ENCODE measurements at regions of chr2 and their contacts with region 1.

Region 1: GRCh38 chr2:73963385-73964120 is 21.2 kb upstream of the TET3 start:
- DNase-seq: peak; percentile 70
- H3K4me3 Mint-ChIP-seq: peak overlapping the region; percentile 44
- H3K27ac Mint-ChIP-seq: peak overlapping the region; percentile 86
- H3K4me1 Mint-ChIP-seq: peaks cover 32% of the 10 kb centered on the region
- H3K27me3 Mint-ChIP-seq: no peaks in the 10 kb centered on the region

Region 2: DNA sequence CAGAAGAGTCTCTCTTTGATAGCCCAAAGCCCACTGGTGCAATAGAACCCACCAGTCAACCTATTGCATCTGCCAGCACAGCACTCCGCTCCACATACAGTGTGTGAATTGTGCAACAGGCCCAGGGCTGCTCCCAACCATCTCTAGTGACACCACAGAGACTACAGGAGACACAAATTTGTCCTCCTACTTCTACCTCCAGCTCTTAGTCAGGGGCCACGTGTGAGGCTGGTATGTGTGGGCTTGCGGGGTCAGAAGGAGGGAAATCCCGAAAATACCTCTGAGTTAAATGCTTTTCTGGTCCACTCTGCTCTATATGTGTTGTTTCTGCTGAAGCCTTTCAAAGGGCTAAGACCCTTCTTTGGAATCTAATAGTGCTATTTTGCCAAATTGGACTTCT is 18.8 kb before region 1 on chr2:
- intact Hi-C with region 1: loop called (anchors 1 kb)
- DNase-seq: no peak
- H3K4me3 Mint-ChIP-seq: peak overlapping the region; percentile 44
- H3K27ac Mint-ChIP-seq: peak overlapping the region; percentile 69
- H3K4me1 Mint-ChIP-seq: peaks cover 53% of the 10 kb centered on the region
- H3K27me3 Mint-ChIP-seq: no peaks in the 10 kb centered on the region

Region 3: GRCh38 chr2:73979686-73980085 is 16.1 kb after region 1 on chr2:
- intact Hi-C with region 1: loop called (anchors 1 kb)
- DNase-seq: peak; percentile 58
- H3K4me3 Mint-ChIP-seq: peak overlapping the region; percentile 65
- H3K27ac Mint-ChIP-seq: peak overlapping the region; percentile 78
- H3K4me1 Mint-ChIP-seq: peaks cover 68% of the 10 kb centered on the region
- H3K27me3 Mint-ChIP-seq: peaks cover 9% of the 10 kb centered on the region

Region 4: GRCh38 chr2:74374509-74375205 is 411.1 kb after region 1 on chr2:
- intact Hi-C with region 1: no loop called
- DNase-seq: no peak
- H3K4me3 Mint-ChIP-seq: no peak overlapping the region
- H3K27ac Mint-ChIP-seq: no peak overlapping the region
- H3K4me1 Mint-ChIP-seq: peaks cover 5% of the 10 kb centered on the region
- H3K27me3 Mint-ChIP-seq: no peaks in the 10 kb centered on the region

Measured in activated CD4-positive, alpha-beta T cell treated with anti-CD3 and anti-CD28 coated beads, Interleukin-2, amount 10 ng/mL, durations not matched to agents 24 days and 14 days (primary cell).